HAP-1 (cell line): ENCODE measurements at regions of chr18 and their contacts with region 1.

Region 1: DNA sequence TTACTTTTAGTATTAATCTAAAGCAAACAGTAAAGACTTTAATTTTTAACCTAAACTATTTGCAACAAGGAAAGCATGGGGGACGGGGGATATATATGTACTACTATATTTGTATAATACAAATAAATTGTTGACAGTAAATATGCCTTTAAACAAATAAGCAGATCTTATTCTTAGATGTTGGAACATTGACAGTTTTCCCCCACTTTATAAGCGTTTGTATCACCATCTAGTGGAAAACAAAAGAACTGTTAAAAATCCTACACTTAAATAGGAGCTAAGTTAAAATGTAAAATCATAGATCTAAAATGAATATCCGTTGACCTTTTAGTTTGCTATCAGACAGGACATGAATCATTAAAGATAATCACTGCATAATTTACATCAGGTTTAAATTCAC is 50.0 kb downstream of the RBBP8 start:
- DNase-seq: peak in 1 of 2 experiments; percentile 44
- H3K4me3 ChIP-seq: no peak overlapping the region
- H3K4me1 ChIP-seq: peaks cover 12% of the 10 kb centered on the region
- H3K27me3 ChIP-seq: no peaks in the 10 kb centered on the region

Region 2: GRCh38 chr18:22813648-22814328 is 169.4 kb before region 1 on chr18:
- in situ Hi-C with region 1: loop called (anchors 10 kb)
- DNase-seq: peak; percentile 33 to 45
- H3K4me3 ChIP-seq: no peak overlapping the region
- H3K4me1 ChIP-seq: no peaks in the 10 kb centered on the region
- H3K27me3 ChIP-seq: peaks cover 3% of the 10 kb centered on the region